Activated CD4-positive, alpha-beta T cell treated with anti-CD3 and anti-CD28 coated beads for 36 hours (primary cell): ENCODE measurements at regions of chr7 and their contacts with region 1.

Region 1: GRCh38 chr7:73726083-73726466 is 6.6 kb upstream of the STX1A start:
- DNase-seq: no peak
- ATAC-seq: peak; percentile 27
- H3K4me3 Mint-ChIP-seq: no peak overlapping the region
- H3K27ac Mint-ChIP-seq: no peak overlapping the region
- H3K4me1 Mint-ChIP-seq: no peaks in the 10 kb centered on the region
- H3K27me3 Mint-ChIP-seq: peaks cover 7% of the 10 kb centered on the region

Region 2: GRCh38 chr7:72924733-72925545 is 801.1 kb before region 1 on chr7 and contains the start of gene POM121:
- CTCF ChIA-PET with region 1: no interaction called
- POLR2A ChIA-PET with region 1: no interaction called
- intact Hi-C with region 1: loop called in 1 of 2 experiments (anchors 5 kb)
- DNase-seq: peak; percentile 90
- ATAC-seq: peak; percentile 87
- H3K4me3 Mint-ChIP-seq: peak within 1 kb of the TSS; percentile 88
- H3K27ac Mint-ChIP-seq: peak within 1 kb of the TSS; percentile 97
- H3K4me1 Mint-ChIP-seq: peaks cover 24% of the 10 kb centered on the region
- H3K27me3 Mint-ChIP-seq: no peaks in the 10 kb centered on the region
- total RNA-seq, gene POM121: 62.2 to 67.4 TPM

Region 3: GRCh38 chr7:73526896-73527821 is 198.9 kb before region 1 on chr7:
- CTCF ChIA-PET with region 1: no interaction called
- POLR2A ChIA-PET with region 1: no interaction called
- intact Hi-C with region 1: no loop called
- DNase-seq: peak; percentile 33
- ATAC-seq: no peak
- H3K4me3 Mint-ChIP-seq: no peak overlapping the region
- H3K27ac Mint-ChIP-seq: peak overlapping the region; percentile 90
- H3K4me1 Mint-ChIP-seq: peaks cover 37% of the 10 kb centered on the region
- H3K27me3 Mint-ChIP-seq: no peaks in the 10 kb centered on the region

Region 4: DNA sequence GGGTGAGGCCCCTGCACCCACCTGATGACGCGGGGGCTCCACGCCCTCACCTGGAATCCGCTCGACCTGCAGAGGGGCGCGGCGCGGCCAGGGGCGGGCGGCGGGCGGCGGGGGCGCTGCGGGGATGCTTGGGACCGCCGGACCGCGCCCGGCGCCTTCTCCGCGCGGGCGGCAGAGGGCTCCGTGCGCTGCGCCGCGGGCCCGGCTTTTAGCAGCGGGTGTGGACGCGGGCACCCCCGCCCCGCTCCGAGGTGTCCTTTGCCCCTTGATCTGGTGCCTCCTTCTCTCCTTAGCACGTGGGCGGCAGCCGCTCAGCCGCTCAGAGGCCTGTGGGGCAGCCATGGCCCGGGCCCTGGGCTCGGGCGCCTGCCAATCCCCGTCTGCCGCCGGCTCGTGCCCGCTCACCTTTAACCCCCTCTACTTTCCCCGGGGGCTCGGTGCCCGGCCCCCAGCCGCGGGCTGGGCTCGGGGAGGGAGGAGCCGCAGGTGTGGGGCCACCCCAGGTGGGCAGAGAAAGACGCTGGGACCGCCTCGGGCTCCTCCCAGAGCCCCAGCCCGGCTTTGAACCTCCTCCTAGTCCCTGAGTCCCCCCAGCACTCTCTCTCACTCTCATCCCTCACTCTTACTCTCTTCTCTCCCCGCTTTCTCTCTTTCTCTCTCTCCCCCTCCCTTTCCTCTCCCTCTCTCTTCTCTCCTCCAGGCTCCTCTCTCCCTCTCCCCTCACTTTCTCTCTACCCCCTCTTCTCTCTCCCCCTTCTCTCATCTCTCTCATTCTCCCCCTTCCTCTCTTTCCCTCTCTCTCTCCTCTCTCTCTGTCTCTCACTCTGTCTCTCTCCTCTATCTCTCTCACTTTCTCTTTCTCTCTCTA is 78.1 kb before region 1 on chr7:
- CTCF ChIA-PET with region 1: no interaction called
- POLR2A ChIA-PET with region 1: interaction called, 4 read pairs
- intact Hi-C with region 1: loop called in 1 of 2 experiments (anchors 5 kb)
- DNase-seq: peak; percentile 62
- ATAC-seq: peak; percentile 79
- H3K4me3 Mint-ChIP-seq: peak overlapping the region; percentile 40
- H3K27ac Mint-ChIP-seq: no peak overlapping the region
- H3K4me1 Mint-ChIP-seq: peaks cover 7% of the 10 kb centered on the region
- H3K27me3 Mint-ChIP-seq: peaks cover 50% of the 10 kb centered on the region

Region 5: GRCh38 chr7:73822319-73823076 is 96.4 kb after region 1 on chr7:
- CTCF ChIA-PET with region 1: no interaction called
- POLR2A ChIA-PET with region 1: no interaction called
- intact Hi-C with region 1: no loop called
- DNase-seq: no peak
- ATAC-seq: no peak
- H3K4me3 Mint-ChIP-seq: no peak overlapping the region
- H3K27ac Mint-ChIP-seq: no peak overlapping the region
- H3K4me1 Mint-ChIP-seq: peaks cover 13% of the 10 kb centered on the region
- H3K27me3 Mint-ChIP-seq: peaks cover 2% of the 10 kb centered on the region

Region 6: DNA sequence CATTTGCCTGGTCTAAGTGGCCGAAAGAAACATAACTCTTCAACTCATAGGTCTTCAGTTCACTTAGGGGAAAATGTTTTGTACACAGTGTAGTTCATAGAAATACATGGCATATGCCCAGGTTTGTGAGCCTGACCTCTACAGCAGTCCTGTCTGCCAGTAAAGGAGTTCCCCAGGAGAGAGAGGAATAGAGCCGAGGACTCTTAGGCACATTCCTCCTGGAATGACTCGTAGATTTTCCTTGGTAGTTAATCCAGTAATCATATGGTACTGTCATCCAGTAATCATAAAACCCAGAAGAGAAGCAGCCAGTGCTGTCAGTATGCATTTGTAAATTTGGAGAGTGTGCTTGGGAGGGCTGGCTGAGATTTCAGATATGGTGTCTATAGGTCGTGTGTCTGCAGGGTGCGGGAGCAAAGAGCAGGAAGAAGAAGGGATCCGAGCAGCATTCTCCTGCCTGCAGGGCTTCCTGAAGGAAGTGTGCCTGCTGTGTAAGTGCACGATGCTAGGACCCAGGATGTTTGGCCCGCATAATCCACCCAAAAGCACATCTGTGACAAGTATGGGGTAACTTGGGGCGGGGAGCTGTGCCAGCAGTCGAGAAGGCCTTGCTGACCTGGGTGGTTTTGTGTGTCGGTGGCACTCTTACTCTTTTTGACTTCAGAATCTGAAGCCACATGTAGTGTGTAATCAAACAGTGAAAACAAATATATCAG is 462.0 kb after region 1 on chr7:
- CTCF ChIA-PET with region 1: no interaction called
- POLR2A ChIA-PET with region 1: no interaction called
- intact Hi-C with region 1: no loop called
- DNase-seq: no peak
- ATAC-seq: no peak
- H3K4me3 Mint-ChIP-seq: no peak overlapping the region
- H3K27ac Mint-ChIP-seq: peak overlapping the region; percentile 14
- H3K4me1 Mint-ChIP-seq: peaks cover 38% of the 10 kb centered on the region
- H3K27me3 Mint-ChIP-seq: no peaks in the 10 kb centered on the region